Activated naive CD4-positive, alpha-beta T cell treated with anti-CD3 and anti-CD28 coated beads for 36 hours (primary cell): ENCODE measurements at regions of chr4 and their contacts with region 1.

Region 1: GRCh38 chr4:108620101-108620932 is at the start of gene RPL34:
- DNase-seq: peak; percentile 99
- H3K4me3 Mint-ChIP-seq: peak within 1 kb of the TSS; percentile 93
- H3K27ac Mint-ChIP-seq: peak within 1 kb of the TSS; percentile 95
- H3K4me1 Mint-ChIP-seq: peaks cover 45% of the 10 kb centered on the region
- H3K27me3 Mint-ChIP-seq: no peaks in the 10 kb centered on the region
- total RNA-seq, gene RPL34: 1,983 to 2,004 TPM

Region 2: DNA sequence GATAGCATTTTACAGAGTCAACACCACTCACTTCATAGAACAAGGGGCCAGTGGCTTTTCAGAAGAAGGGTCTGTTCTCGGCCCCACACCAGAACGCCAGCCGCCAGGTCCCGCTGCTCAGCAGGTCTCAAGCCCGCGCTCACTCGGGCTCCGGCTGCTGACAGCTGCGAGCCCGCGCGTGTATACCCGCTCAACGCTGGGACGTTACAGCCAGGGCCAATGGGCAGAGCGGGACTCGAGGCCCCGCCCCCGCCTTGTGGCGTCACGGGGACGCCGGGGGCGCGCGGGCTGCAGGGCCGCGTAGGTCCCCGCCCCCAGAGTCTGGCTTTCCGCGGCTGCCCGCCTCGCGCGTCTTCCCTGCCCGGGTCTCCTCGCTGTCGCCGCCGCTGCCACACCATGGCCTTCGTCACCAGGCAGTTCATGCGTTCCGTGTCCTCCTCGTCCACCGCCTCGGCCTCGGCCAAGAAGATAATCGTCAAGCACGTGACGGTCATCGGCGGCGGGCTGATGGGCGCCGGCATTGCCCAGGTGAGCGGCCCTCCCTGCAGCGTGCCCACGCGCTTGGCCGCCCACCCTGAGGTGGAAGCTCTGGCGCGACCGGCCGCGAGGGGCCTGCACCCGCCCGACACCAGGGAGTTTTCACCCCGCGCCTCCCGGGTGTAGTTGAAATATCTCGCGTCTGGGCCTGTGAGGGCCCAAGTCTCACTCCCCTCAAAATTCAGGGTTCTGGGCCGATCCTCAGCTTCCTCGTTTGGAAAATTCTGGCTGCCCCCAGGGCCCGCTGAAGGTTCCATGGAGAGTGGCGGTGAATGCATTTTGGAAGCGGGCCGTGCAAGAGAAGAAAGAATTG is 630.6 kb before region 1 on chr4 and contains the start of gene HADH:
- CTCF ChIA-PET with region 1: no interaction called
- intact Hi-C with region 1: loop called (anchors 1 kb)
- DNase-seq: peak; percentile 94
- H3K4me3 Mint-ChIP-seq: peak within 1 kb of the TSS; percentile 98
- H3K27ac Mint-ChIP-seq: peak within 1 kb of the TSS; percentile 90
- H3K4me1 Mint-ChIP-seq: peaks cover 57% of the 10 kb centered on the region
- H3K27me3 Mint-ChIP-seq: no peaks in the 10 kb centered on the region
- total RNA-seq, gene HADH: 56.1 to 57.6 TPM

Region 3: DNA sequence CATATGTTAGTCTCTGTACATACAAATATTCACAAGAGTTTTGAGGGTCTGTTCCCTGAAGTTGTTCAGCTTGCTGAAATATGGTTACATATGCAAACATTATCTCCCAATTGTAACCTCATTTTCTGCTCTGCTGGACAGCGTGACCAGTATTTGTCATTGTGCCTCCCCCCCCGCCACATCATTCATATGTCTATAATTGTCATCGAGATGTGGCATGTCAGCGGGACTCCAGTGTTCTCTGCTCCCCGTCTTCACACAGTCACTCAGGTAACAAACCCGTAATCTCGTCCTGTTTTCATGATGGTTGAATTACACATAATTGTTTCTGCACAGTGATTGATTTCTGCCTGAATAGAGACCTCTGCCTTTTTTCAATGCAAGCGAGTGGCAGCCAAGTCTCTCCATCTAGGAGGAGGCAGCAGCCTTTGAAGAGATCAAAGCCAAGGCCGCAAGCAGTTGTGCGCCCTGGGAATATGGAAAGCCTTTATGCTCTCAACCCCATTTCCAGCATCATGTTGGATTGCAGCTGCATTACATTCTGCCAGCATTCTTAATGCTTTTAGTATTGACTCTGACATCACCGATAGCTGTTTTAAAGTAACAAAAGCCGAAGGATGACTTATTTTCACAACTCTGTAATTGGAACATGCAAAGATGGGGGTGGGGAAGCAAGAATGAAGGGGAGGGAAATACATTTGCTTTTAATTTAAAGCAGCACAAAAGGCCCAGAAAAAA is 478.9 kb before region 1 on chr4:
- CTCF ChIA-PET with region 1: no interaction called
- intact Hi-C with region 1: loop called (anchors 1 kb)
- DNase-seq: peak; percentile 72
- H3K4me3 Mint-ChIP-seq: peak overlapping the region; percentile 77
- H3K27ac Mint-ChIP-seq: peak overlapping the region; percentile 99
- H3K4me1 Mint-ChIP-seq: peaks cover 89% of the 10 kb centered on the region
- H3K27me3 Mint-ChIP-seq: no peaks in the 10 kb centered on the region

Region 4: GRCh38 chr4:108172753-108173598 is 447.3 kb before region 1 on chr4:
- CTCF ChIA-PET with region 1: no interaction called
- intact Hi-C with region 1: loop called (anchors 1 kb)
- DNase-seq: peak; percentile 79
- H3K4me3 Mint-ChIP-seq: peak overlapping the region; percentile 91
- H3K27ac Mint-ChIP-seq: peak overlapping the region; percentile 92
- H3K4me1 Mint-ChIP-seq: peaks cover 50% of the 10 kb centered on the region
- H3K27me3 Mint-ChIP-seq: no peaks in the 10 kb centered on the region

Region 5: DNA sequence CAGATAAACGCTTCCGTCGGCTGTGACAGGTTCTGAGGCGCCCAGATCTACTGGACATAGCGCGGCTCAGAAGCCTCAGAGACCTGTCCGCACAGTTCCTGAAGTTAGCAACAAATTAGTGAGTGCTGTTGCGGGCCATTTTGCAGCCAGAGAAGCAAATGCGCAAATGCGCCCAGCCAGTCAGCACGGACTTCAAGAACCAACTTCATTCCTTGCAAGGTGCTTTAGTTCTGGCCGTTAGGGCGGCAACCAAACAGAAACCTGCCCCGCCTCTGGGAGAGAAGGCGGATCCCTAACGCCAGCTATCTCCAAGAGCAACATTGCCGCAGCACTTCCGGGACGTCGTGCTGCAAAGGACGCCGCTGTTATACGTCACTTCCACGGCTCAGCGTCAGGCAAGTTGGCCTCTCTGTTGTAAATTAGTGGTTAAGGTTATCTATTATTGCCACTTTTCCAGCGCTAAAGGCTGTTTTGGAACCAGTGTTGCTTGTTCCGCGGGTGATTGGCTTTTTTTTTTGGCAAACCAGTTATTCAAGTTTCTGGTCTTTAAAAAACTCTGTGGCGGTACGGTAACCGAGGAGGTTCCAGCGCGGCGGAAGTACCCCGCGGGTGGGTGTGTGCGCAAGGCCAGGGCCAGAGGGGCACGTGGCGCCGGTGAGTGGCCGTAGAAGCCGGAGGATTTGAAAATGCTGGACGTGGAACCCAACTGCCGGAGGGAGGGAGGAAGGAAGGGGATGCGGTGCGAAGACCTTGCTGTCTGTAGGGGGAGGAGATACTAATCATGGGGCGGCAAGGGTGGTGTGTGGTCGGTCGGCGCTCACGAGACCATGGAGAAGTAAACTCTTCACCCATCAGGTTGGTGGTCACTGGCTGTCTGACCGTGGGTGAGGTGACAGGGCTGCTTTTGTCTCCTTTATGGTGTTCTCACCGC is 1195.1 kb after region 1 on chr4 and contains the start of gene GAR1:
- CTCF ChIA-PET with region 1: no interaction called
- intact Hi-C with region 1: loop called (anchors 10 kb)
- DNase-seq: peak; percentile 93
- H3K4me3 Mint-ChIP-seq: peak within 1 kb of the TSS; percentile 99
- H3K27ac Mint-ChIP-seq: peak within 1 kb of the TSS; percentile 95
- H3K4me1 Mint-ChIP-seq: peaks cover 47% of the 10 kb centered on the region
- H3K27me3 Mint-ChIP-seq: no peaks in the 10 kb centered on the region
- total RNA-seq, gene GAR1: 18.9 to 24.4 TPM